Calu3 (cell line): ENCODE measurements at regions of chr5 and their contacts with region 1.

Region 1: DNA sequence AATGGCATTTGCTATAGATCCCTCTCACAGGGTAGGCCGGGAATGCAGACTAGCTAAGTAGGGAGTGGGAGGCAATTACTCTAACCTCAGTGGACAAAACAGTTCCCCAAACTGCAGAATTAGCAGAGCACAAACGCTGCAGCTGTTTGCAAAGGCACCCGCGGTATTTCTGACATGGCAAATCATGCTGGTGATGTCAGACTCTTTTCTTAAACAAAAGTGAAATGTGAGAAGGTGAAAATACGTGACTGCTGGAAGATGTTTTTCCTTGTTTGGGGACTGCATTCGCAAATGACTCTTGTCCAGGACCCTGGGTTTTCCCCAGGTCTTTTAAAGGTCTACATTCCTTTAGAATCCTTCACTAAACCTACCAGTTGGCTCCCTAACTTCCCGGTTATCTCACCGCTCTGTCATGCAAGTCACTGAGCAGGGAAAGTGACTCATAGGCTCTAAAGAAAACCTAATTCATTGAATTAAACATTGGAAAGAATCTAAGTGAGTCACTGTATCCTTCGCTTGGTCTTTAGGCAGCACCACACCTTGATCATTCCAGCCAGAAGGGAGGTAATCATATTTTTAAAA is 91.5 kb upstream of the DNAH5 start:
- DNase-seq: peak; percentile 85
- H3K4me3 Mint-ChIP-seq: peak overlapping the region; percentile 49
- H3K27ac Mint-ChIP-seq: peak overlapping the region; percentile 99
- H3K4me1 Mint-ChIP-seq: peaks cover 68% of the 10 kb centered on the region
- H3K27me3 Mint-ChIP-seq: no peaks in the 10 kb centered on the region
- CTCF ChIP-seq: no peak

Region 2: DNA sequence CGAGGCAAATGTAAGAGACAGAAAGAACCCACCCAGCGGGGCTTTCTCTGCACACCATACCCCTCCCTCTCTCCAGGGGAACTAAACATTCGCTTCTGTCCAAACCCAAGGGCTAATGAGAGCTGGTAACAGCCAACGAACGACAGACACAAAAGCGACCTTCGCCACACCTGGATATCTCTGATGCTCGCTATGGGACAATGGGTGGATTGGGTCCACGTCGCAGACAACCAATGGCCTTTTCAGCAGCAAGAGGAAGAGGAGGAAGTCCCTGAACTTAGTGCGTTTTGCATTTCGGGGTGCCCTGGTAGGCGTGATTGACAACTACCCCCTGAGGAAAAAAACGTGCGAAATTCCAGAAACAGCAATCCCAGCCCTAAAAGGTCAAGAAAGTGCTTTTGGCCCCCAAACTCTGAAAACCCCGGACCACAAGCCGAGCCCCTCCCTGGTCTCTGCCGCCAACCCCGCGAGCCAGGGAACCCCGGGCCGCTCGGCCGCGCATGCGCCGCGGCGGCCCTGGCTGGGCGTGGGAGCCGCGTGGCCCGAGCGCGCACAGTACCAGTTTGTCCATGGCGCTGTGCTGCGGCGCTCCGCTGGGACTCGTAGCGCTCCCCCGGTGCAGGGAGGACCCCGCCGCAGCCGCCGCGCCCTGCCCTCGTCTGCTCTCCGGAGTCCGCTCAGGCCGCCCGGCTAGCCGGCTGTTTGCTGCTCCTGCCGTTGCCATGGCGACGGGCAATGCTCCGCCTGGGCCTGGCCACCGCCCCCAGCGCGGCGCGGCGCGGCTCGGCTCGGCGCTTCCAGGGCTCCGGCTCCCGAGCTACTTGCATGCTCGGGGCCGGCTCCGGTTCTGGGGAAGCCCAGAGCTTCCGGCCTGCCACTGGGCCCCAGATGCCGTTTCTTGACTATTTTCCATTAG is 24.6 kb before region 1 on chr5:
- CTCF ChIA-PET with region 1: interaction called, 5 read pairs
- intact Hi-C with region 1: loop called (anchors 2 kb)
- DNase-seq: peak; percentile 94
- H3K4me3 Mint-ChIP-seq: peak overlapping the region; percentile 84
- H3K27ac Mint-ChIP-seq: peak overlapping the region; percentile 91
- H3K4me1 Mint-ChIP-seq: peaks cover 34% of the 10 kb centered on the region
- H3K27me3 Mint-ChIP-seq: no peaks in the 10 kb centered on the region
- CTCF ChIP-seq: no peak

Region 3: GRCh38 chr5:14108170-14108996 is 72.4 kb after region 1 on chr5:
- CTCF ChIA-PET with region 1: interaction called, 4 read pairs
- intact Hi-C with region 1: loop called (anchors 2 kb)
- DNase-seq: peak; percentile 64
- H3K4me3 Mint-ChIP-seq: peak overlapping the region; percentile 1
- H3K27ac Mint-ChIP-seq: no peak overlapping the region
- H3K4me1 Mint-ChIP-seq: peaks cover 37% of the 10 kb centered on the region
- H3K27me3 Mint-ChIP-seq: no peaks in the 10 kb centered on the region
- CTCF ChIP-seq: peak; percentile 57

Region 4: GRCh38 chr5:14144586-14145434 is 108.9 kb after region 1 on chr5:
- CTCF ChIA-PET with region 1: interaction called, 3 read pairs
- intact Hi-C with region 1: loop called (anchors 2 kb)
- DNase-seq: peak; percentile 66
- H3K4me3 Mint-ChIP-seq: peak overlapping the region; percentile 81
- H3K27ac Mint-ChIP-seq: peak overlapping the region; percentile 84
- H3K4me1 Mint-ChIP-seq: peaks cover 38% of the 10 kb centered on the region
- H3K27me3 Mint-ChIP-seq: no peaks in the 10 kb centered on the region
- CTCF ChIP-seq: no peak

Region 5: DNA sequence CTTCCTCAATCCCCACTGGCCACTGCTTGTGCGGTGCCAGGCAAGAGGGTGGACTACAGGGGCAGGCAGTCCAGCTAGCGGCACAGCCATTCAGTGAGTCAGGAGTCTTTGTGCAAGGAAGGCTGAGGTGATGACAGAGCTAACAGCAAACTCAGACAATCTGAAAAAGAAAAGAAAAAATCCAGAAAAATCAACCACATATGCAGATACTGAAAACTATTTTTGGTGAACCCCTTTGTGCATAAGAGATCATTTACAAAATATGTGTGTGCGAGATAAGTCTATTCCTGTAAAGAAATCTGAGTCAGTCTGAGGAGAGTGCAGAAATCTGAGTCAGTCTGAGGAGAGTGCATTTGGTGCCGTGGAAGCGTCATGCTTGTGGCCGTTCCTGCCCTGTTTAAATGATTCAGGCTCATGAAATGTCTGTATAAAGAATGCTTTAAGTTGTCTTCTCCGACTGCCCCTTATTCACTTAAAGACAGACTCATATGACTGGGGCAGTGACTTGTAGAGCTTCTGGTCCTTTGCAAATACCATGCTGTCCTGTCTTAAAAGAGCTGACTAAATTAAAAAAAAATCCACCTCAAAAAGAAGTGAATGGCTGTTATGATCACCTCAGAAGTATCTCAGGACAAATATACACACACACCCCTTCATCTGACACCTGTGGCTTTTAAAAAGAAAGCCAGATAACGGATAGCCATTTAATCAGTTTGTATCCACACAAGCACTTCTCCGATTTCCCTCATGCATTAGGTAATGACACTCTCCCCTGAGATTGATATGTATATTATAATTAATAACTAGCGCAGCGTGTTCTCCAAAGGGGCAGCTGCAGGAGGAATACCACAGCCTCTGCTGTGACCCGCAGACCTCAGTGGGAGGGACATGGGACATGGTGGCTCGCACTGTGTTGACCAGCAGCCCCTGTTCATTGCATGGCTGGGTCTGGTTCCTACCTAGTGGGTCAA is 154.5 kb after region 1 on chr5:
- CTCF ChIA-PET with region 1: interaction called, 3 read pairs
- intact Hi-C with region 1: loop called (anchors 5 kb)
- DNase-seq: peak; percentile 49
- H3K4me3 Mint-ChIP-seq: peak overlapping the region; percentile 62
- H3K27ac Mint-ChIP-seq: peak overlapping the region; percentile 82
- H3K4me1 Mint-ChIP-seq: peaks cover 74% of the 10 kb centered on the region
- H3K27me3 Mint-ChIP-seq: no peaks in the 10 kb centered on the region
- CTCF ChIP-seq: no peak

Region 6: GRCh38 chr5:14270209-14270702 is 234.3 kb after region 1 on chr5:
- CTCF ChIA-PET with region 1: interaction called, 4 read pairs
- intact Hi-C with region 1: loop called (anchors 1 kb)
- DNase-seq: peak; percentile 52
- H3K4me3 Mint-ChIP-seq: no peak overlapping the region
- H3K27ac Mint-ChIP-seq: peak overlapping the region; percentile 56
- H3K4me1 Mint-ChIP-seq: peaks cover 66% of the 10 kb centered on the region
- H3K27me3 Mint-ChIP-seq: no peaks in the 10 kb centered on the region
- CTCF ChIP-seq: peak; percentile 70

Region 7: DNA sequence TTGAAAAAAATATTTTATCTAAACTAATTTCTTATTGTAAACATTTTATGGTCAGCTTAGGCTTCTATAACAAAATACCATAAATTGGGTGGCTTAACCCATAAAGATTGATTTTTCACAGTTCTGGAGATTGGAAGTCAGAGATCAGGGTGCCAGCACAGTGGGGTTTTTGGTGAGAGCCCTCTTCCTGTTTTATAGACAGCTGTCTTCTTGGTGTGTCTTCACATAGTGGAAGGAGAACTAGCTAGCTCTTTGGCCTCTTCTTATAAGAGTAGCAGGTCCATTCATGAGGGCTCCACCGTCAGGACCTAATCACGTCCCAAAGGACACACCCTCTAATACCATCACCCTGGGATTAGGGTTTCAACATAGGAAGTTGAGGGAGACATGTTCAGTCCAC is 572.2 kb after region 1 on chr5:
- CTCF ChIA-PET with region 1: no interaction called
- intact Hi-C with region 1: no loop called
- DNase-seq: no peak
- H3K4me3 Mint-ChIP-seq: no peak overlapping the region
- H3K27ac Mint-ChIP-seq: no peak overlapping the region
- H3K4me1 Mint-ChIP-seq: no peaks in the 10 kb centered on the region
- H3K27me3 Mint-ChIP-seq: no peaks in the 10 kb centered on the region
- CTCF ChIP-seq: no peak